WTC11 (cell line): ENCODE measurements at regions of chr2 and their contacts with region 1.

Region 1: GRCh38 chr2:234334151-234334550 is 162.7 kb downstream of the ARL4C start:
- DNase-seq: no peak
- ATAC-seq: 0 out of 2 replicates have a peak, but pooled peaks have one; percentile 32
- H3K4me3 Mint-ChIP-seq: no peak overlapping the region
- H3K27ac Mint-ChIP-seq: no peak overlapping the region
- H3K4me1 Mint-ChIP-seq: peaks cover 8% of the 10 kb centered on the region
- H3K27me3 Mint-ChIP-seq: no peaks in the 10 kb centered on the region
- CTCF ChIP-seq: no peak

Region 2: GRCh38 chr2:233700028-233700635 is 634.0 kb before region 1 on chr2:
- CTCF ChIA-PET with region 1: no interaction called
- POLR2A ChIA-PET with region 1: interaction called, 15 read pairs
- DNase-seq: no peak
- ATAC-seq: peak; percentile 67
- H3K4me3 Mint-ChIP-seq: no peak overlapping the region
- H3K27ac Mint-ChIP-seq: 0 out of 2 replicates have a peak overlapping the region, but pooled peaks have one; percentile 38
- H3K4me1 Mint-ChIP-seq: peaks cover 7% of the 10 kb centered on the region; the same call in 1 of the 2 replicates
- H3K27me3 Mint-ChIP-seq: no peaks in the 10 kb centered on the region
- CTCF ChIP-seq: no peak

Region 3: GRCh38 chr2:234348081-234348480 is 13.9 kb after region 1 on chr2:
- CTCF ChIA-PET with region 1: no interaction called
- POLR2A ChIA-PET with region 1: no interaction called
- DNase-seq: no peak
- ATAC-seq: no peak
- H3K4me3 Mint-ChIP-seq: no peak overlapping the region
- H3K27ac Mint-ChIP-seq: no peak overlapping the region
- H3K4me1 Mint-ChIP-seq: no peaks in the 10 kb centered on the region
- H3K27me3 Mint-ChIP-seq: no peaks in the 10 kb centered on the region; the same call in 1 of the 2 replicates
- CTCF ChIP-seq: no peak